Activated CD4-positive, alpha-beta memory T cell treated with anti-CD3 and anti-CD28 coated beads for 36 hours (primary cell): ENCODE measurements at regions of chr19 and their contacts with region 1.

Region 1: DNA sequence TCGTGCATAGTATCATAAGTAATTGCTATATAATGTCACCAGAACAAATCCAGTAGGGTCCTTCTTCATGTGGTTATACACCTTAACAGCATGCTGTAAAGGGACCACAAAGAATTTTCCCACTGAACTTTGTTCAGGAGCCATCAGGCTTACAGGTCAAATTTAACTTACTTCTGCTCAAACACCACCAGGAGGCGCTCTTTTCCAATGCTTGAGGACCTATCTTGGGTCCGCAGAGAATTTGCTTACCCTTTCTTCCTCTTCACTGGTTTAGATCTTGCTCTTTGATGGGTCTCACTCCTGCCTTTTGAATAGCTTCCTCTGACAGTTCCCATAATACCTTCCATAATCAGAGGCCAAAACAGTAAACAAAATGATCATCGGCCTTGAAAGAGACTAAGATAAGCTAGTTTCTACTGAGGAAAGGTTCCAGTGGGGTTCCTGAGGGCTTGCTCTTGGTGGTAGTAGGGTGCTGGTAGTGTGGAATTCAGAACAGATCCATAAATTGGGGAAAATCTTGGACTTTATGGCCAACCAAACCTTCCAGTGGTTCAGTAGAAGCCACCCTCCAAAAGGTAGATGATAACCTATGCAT is 37.4 kb downstream of the SCGB2B2 start:
- DNase-seq: peak; percentile 61
- H3K4me3 Mint-ChIP-seq: no peak overlapping the region
- H3K27ac Mint-ChIP-seq: no peak overlapping the region
- H3K4me1 Mint-ChIP-seq: no peaks in the 10 kb centered on the region
- H3K27me3 Mint-ChIP-seq: no peaks in the 10 kb centered on the region

Region 2: DNA sequence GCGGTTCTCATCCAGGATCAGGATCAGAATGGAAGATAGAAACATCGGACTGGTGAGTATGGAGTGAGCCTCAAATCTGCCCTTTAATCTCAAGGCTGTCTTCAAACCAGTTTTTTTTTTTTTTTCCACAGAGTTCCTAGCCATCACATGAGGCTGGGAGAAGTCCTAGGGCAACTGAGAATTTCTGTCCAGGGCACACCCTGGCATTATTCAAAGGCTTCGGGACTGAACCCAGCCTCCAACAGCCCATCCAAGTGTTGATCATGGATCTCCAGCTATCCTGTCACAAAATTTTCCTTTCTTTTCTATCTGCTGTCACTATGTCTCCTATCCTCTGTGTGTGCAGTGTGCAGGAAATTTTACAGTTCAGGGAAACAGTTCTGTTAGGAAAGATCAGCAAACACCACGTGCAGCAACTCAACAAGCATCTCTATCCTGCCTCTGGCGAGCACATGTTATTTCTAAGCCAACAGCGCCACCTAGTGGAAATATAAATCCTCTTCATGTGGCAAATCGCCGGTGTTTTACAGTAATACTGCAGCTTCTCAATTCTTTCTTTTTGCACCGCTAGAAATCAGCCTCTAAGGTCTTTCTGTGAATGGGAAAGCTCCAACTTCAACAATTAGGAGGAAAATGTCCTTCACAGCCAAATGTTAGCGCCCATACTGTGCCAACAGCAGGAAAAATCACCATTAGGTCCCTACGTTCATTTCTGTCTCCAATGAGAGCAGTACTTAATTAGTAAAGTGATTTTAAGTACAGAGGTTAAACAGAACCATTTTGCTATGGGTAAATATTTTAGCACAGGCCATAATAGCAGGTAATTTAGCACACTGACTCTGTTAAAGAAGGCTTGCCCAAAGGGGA is 73.0 kb after region 1 on chr19:
- CTCF ChIA-PET with region 1: interaction called, 111 read pairs
- POLR2A ChIA-PET with region 1: no interaction called
- intact Hi-C with region 1: loop called (anchors 1 kb)
- DNase-seq: peak; percentile 60
- H3K4me3 Mint-ChIP-seq: no peak overlapping the region
- H3K27ac Mint-ChIP-seq: no peak overlapping the region
- H3K4me1 Mint-ChIP-seq: no peaks in the 10 kb centered on the region
- H3K27me3 Mint-ChIP-seq: peaks cover 15% of the 10 kb centered on the region